Activated CD4-positive, alpha-beta T cell treated with anti-CD3 and anti-CD28 coated beads, Interleukin-2, amount 10 ng/mL, durations not matched to agents 7 days and 5 days (primary cell): ENCODE measurements at regions of chr6 and their contacts with region 1.

Region 1: GRCh38 chr6:130587778-130588520 is 222.1 kb downstream of the TMEM200A start:
- DNase-seq: no peak
- H3K4me3 Mint-ChIP-seq: no peak overlapping the region
- H3K27ac Mint-ChIP-seq: no peak overlapping the region
- H3K4me1 Mint-ChIP-seq: peaks cover 12% of the 10 kb centered on the region
- H3K27me3 Mint-ChIP-seq: peaks cover 3% of the 10 kb centered on the region

Region 2: DNA sequence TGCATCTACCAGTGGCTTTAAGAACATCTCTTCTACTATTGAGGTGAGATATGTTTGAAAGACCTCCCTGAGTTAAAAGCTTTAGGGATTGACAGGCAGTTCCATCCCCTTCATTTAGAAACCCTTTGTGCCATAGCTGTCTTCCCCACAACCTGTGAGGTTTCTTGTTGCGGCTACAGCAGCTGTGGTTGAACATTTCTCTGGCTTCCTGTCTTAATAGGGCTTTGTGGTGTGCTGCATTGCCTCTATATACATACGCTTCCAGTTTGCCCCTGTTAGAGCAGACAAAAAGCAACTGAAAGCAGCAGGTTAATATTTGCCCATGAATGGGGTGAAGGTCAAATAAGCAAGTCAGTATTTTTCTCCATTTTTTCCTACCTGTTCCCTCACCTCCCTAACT is 12.0 kb before region 1 on chr6:
- CTCF ChIA-PET with region 1: interaction called, 23 read pairs
- POLR2A ChIA-PET with region 1: no interaction called
- DNase-seq: peak; percentile 85
- H3K4me3 Mint-ChIP-seq: peak overlapping the region; percentile 51
- H3K27ac Mint-ChIP-seq: peak overlapping the region; percentile 93
- H3K4me1 Mint-ChIP-seq: peaks cover 49% of the 10 kb centered on the region
- H3K27me3 Mint-ChIP-seq: no peaks in the 10 kb centered on the region